PC-3 (cell line): ENCODE measurements at regions of chr3 and their contacts with region 1.

Region 1: DNA sequence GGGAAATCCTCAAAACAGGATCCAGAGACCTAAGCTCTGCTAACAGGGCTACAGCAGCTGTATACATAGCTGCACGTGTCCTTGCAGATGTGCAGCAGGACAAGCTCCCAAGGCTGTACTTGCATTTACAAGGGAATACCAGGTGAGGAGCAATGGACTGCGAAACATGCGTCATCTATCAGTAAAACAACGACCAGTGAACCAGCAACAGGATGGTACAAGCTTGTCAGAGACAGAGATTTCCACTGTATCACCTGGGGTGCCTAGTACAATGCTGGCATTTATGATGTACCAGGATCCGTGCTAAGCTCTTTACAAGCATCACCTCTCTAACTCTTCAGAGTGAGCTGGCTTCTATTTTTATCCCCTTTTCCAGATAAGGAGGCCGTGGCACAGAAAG is 227.3 kb downstream of the FOXP1 start:
- DNase-seq: no peak
- ATAC-seq: no peak
- H3K4me3 ChIP-seq: no peak overlapping the region
- H3K27ac ChIP-seq: no peak overlapping the region
- H3K4me1 ChIP-seq: no peaks in the 10 kb centered on the region
- H3K27me3 ChIP-seq: no peaks in the 10 kb centered on the region
- CTCF ChIP-seq: no peak

Region 2: GRCh38 chr3:71456156-71456555 is 99.9 kb after region 1 on chr3:
- CTCF ChIA-PET with region 1: no interaction called
- POLR2A ChIA-PET with region 1: interaction called, 15 read pairs
- intact Hi-C with region 1: no loop called
- DNase-seq: no peak
- ATAC-seq: no peak
- H3K4me3 ChIP-seq: no peak overlapping the region
- H3K27ac ChIP-seq: no peak overlapping the region
- H3K4me1 ChIP-seq: peaks cover 47% of the 10 kb centered on the region
- H3K27me3 ChIP-seq: no peaks in the 10 kb centered on the region
- CTCF ChIP-seq: no peak